ENCODE measurements at regions of chr2 and their contacts with region 1.

Region 1: GRCh38 chr2:224284134-224284946 is 117.6 kb downstream of the FAM124B start:
- DNase-seq: peak; percentile 43
- H3K4me3 ChIP-seq: no peak overlapping the region
- H3K27ac ChIP-seq: no peak overlapping the region
- H3K4me1 ChIP-seq: no peaks in the 10 kb centered on the region
- H3K27me3 ChIP-seq: peaks cover 2% of the 10 kb centered on the region
- CTCF ChIP-seq: peak; percentile 54 to 80

Region 2: DNA sequence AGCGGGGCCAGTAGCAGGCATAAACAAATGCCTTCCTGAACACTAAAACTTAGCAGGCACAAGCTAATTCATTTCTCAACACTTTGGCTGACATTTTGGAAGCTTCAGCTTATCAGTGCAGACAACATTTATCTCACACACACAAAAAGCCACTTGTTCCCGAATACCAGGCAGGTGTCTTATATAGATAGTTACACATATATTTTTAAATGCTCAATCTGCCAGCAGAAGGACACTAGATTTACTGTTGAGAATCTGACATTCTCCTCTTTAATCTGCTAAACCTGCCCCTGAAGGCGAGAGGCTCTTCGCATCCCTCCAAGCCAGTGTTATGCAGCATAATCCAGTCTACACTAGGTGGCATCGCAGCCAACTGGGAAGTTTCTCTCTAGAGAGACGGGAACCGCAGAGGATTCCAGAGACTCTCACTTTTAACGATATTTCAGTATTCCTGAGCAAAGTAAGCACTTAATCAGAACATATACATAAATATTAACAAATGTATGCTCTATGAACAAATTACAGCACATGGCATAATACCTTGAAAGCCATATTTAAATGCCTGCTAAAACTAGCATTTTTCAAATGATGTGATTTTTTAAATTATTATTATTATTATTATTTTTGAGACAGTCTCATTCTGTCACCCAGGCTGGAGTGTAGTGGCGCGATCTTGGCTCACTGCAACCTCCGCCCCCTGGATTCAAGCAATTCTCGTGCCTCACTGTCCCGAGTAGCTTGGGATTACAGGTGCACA is 592.0 kb before region 1 on chr2:
- CTCF ChIA-PET with region 1: no interaction called
- dilution Hi-C with region 1: no loop called
- in situ Hi-C with region 1: no loop called
- intact Hi-C with region 1: loop called (anchors 1 kb)
- DNase-seq: peak; percentile 60
- H3K4me3 ChIP-seq: no peak overlapping the region
- H3K27ac ChIP-seq: no peak overlapping the region
- H3K4me1 ChIP-seq: peaks cover 28% of the 10 kb centered on the region
- H3K27me3 ChIP-seq: no peaks in the 10 kb centered on the region
- CTCF ChIP-seq: peak; percentile 87 to 92

Region 3: DNA sequence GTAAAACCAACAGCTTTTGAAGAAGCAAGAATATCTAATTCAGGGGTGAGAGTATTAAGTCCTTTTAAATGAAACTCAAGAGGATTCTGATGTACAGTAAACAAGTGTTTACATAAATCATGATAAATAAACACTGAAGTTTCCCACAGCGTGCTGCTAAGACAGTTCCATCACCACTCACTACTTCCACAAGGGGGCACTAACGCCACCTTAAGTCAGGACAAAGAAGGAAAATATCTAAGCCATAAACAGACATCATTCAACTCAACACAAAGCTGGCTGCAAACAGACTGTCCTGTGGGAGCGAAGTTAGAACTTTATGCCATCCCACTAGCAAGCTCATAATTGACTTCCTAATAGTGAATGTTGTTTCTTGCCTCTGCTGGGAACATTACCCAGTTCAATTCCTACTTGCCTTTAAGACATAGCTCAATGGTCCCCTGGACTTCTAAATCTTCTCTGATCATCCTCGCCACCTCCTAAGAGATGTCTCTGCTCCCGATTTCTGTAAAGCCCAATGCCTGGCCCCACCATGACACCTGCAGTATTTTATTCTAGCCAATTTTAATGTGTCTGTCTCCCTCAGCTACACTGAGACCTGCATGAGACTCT is 290.6 kb before region 1 on chr2:
- CTCF ChIA-PET with region 1: interaction called, 19 read pairs
- dilution Hi-C with region 1: loop called (anchors 25 kb)
- in situ Hi-C with region 1: loop called (anchors 5 to 10 kb)
- intact Hi-C with region 1: loop called (anchors 1 kb)
- DNase-seq: peak; percentile 48
- H3K4me3 ChIP-seq: no peak overlapping the region
- H3K27ac ChIP-seq: no peak overlapping the region
- H3K4me1 ChIP-seq: peaks cover 12% of the 10 kb centered on the region
- H3K27me3 ChIP-seq: no peaks in the 10 kb centered on the region
- CTCF ChIP-seq: peak; percentile 81 to 83

Region 4: DNA sequence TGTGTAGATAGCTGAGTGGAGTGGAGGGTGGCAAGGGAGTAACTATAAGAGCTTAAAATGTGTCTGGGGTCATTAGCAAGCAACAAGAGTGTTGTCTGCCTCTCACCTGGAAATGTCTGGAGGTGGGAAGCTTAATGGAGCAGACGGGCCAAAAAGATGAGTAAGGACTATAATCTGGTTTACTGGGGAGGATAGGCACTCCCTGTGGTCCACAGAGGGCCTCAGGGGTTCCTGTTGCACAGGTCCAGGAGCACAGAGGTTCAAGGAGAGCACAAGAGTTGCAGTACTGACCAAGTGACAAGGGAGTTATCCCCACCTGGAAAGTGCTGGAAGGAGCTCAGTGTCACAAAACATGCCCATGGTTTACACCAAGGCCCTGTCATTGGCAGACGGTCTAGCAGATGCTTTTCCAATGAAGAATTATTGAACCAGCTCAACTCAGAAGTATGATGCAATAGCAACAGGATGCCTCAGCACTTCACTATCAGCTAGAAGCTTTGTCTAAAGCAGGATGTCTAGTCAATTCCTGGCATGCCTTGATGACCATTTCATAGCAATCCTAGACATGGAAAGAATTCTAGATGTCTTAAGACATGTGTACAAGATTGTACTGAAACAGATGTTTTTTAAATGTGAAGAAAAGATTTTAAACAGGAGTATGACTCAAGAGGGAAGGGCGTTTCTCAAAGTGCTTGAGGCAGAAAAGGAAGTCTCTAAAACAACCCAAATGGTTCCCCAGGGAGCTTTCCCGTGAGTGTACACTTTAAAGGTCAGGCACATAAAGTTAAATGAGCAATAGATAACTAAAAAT is 182.3 kb before region 1 on chr2:
- CTCF ChIA-PET with region 1: no interaction called
- dilution Hi-C with region 1: no loop called
- in situ Hi-C with region 1: no loop called
- intact Hi-C with region 1: loop called (anchors 5 kb)
- DNase-seq: peak; percentile 94
- H3K4me3 ChIP-seq: no peak overlapping the region
- H3K27ac ChIP-seq: peak overlapping the region; percentile 54
- H3K4me1 ChIP-seq: peaks cover 45% of the 10 kb centered on the region
- H3K27me3 ChIP-seq: no peaks in the 10 kb centered on the region
- CTCF ChIP-seq: no peak

Region 5: GRCh38 chr2:224260372-224261020 is 23.8 kb before region 1 on chr2:
- CTCF ChIA-PET with region 1: no interaction called
- dilution Hi-C with region 1: no loop called
- in situ Hi-C with region 1: no loop called
- intact Hi-C with region 1: no loop called
- DNase-seq: no peak
- H3K4me3 ChIP-seq: no peak overlapping the region
- H3K27ac ChIP-seq: no peak overlapping the region
- H3K4me1 ChIP-seq: no peaks in the 10 kb centered on the region
- H3K27me3 ChIP-seq: no peaks in the 10 kb centered on the region
- CTCF ChIP-seq: no peak

Region 6: DNA sequence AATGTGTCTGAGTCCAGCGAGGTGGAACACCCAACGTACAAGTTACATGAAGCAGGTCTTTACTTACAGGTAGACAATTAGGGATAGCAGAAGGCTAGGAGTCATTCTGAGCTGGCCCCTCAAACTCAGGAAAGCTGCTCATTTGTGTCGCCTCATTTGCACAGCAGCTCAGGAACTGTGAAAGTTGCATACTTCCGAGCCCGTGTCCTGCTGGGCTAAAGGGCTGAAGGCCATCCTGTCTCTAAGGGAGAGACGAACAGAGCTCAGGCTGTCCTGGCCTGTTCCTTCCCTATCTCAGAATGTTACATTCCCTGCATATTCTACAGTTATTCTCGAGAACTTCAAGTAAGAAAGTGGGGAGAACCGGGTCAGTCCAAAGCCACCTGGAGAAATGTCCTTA is 18.6 kb after region 1 on chr2:
- CTCF ChIA-PET with region 1: no interaction called
- dilution Hi-C with region 1: no loop called
- in situ Hi-C with region 1: no loop called
- intact Hi-C with region 1: no loop called
- DNase-seq: no peak
- H3K4me3 ChIP-seq: no peak overlapping the region
- H3K27ac ChIP-seq: no peak overlapping the region
- H3K4me1 ChIP-seq: no peaks in the 10 kb centered on the region
- H3K27me3 ChIP-seq: no peaks in the 10 kb centered on the region
- CTCF ChIP-seq: no peak

Region 7: DNA sequence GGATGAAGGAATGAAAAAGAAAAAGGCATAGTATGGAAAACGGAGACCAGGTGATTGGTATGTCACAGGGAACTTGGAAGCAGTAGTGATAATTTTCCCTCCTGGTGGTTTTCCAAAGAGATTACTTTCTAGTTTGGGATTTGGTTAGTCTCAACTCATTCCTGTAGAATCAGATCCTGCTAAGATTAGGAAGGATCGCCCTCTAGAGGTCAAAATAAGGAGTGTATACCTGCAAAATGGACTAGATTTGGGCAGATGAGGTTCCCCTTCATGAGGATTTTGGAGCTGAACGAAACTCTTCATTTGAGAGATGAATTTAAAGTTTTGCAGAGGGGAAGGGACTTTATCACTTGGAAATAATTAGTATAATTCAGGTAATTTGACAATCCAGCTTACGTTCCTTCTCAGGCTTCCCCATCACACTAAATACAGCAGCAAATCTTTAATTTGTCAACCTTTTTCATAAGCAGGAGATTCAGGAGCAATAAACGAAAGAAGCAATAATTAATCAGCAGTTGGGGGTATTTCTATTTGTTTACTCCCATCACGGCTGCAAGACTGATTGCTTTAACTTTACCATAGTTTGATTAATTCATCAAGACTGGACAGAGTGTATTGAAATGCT is 366.6 kb after region 1 on chr2:
- CTCF ChIA-PET with region 1: no interaction called
- dilution Hi-C with region 1: no loop called
- in situ Hi-C with region 1: no loop called
- intact Hi-C with region 1: loop called (anchors 2 kb)
- DNase-seq: peak; percentile 31
- H3K4me3 ChIP-seq: no peak overlapping the region
- H3K27ac ChIP-seq: no peak overlapping the region
- H3K4me1 ChIP-seq: no peaks in the 10 kb centered on the region
- H3K27me3 ChIP-seq: no peaks in the 10 kb centered on the region
- CTCF ChIP-seq: peak; percentile 66 to 81